ENCODE measurements at regions of chr6 and their contacts with region 1.

Region 1: GRCh38 chr6:41545703-41546474 is at the start of gene FOXP4:
- DNase-seq: peak; percentile 90
- H3K4me3 Mint-ChIP-seq: peak within 1 kb of the TSS; percentile 94
- H3K27ac Mint-ChIP-seq: peak within 1 kb of the TSS; percentile 85
- H3K4me1 Mint-ChIP-seq: peaks cover 28% of the 10 kb centered on the region
- H3K27me3 Mint-ChIP-seq: peaks cover 2% of the 10 kb centered on the region
- total RNA-seq, gene FOXP4: 19.5 to 21.6 TPM

Region 2: DNA sequence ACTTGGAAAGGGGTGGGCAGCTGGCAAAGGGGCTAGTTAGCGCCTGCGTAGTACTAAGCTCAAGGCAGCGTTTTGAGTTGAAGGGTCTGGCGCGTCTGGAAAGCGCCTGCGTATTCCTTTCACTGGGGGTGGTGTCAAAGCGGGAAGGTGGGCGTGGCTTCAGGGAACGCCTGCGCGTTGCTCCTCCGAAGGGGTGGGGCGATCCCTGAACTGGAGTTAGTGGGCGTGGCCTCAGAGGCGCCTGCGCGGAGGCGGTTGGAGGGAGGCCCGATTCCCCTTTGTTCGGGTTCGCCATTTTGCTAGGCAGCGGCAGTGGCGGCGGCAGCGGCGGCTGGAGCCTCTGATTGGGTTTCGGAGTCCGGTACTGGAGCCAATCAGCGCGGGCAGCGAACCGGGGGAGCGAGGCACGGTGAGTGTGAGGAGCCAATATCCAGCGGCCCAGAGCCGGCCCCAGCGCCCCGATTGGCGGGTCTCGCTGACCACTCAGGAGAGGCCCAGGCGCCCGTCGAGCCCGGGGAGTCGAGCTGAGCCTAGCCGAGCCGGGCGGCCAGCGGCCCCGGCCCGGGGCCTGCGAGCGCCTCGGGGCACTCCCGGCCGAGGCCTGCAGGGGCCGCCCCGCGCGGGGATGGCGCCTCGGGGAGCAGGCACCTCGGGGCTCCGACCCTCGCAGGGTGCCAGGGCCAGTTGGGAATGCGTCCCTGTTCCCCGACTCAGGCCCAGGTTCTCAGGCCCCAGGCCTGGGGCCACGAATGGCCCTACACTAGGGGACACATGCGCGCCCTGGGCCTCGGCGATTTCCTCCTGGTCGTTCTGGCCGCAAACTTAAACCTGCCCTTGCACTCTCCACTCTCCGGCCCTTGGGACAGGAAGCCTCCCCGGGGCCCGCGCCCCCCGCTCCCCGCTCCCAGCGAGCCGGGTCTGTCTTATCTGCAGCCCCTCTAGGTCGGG is 472.9 kb before region 1 on chr6 and contains the start of gene NFYA:
- CTCF ChIA-PET with region 1: no interaction called
- POLR2A ChIA-PET with region 1: no interaction called
- intact Hi-C with region 1: loop called (anchors 5 kb)
- DNase-seq: peak; percentile 100
- H3K4me3 Mint-ChIP-seq: peak within 1 kb of the TSS; percentile 93
- H3K27ac Mint-ChIP-seq: peak within 1 kb of the TSS; percentile 98
- H3K4me1 Mint-ChIP-seq: peaks cover 52% of the 10 kb centered on the region
- H3K27me3 Mint-ChIP-seq: no peaks in the 10 kb centered on the region
- total RNA-seq, gene NFYA: 30.2 to 30.4 TPM

Region 3: GRCh38 chr6:41392246-41392645 is 153.6 kb before region 1 on chr6:
- CTCF ChIA-PET with region 1: no interaction called
- POLR2A ChIA-PET with region 1: no interaction called
- intact Hi-C with region 1: no loop called
- DNase-seq: no peak
- H3K4me3 Mint-ChIP-seq: no peak overlapping the region
- H3K27ac Mint-ChIP-seq: no peak overlapping the region
- H3K4me1 Mint-ChIP-seq: no peaks in the 10 kb centered on the region
- H3K27me3 Mint-ChIP-seq: peaks cover 15% of the 10 kb centered on the region

Region 4: GRCh38 chr6:41531591-41532582 is 14.0 kb before region 1 on chr6:
- CTCF ChIA-PET with region 1: interaction called, 9 read pairs
- POLR2A ChIA-PET with region 1: interaction called, 16 read pairs
- intact Hi-C with region 1: loop called (anchors 1 kb)
- DNase-seq: peak; percentile 88
- H3K4me3 Mint-ChIP-seq: peak overlapping the region; percentile 74
- H3K27ac Mint-ChIP-seq: peak overlapping the region; percentile 99
- H3K4me1 Mint-ChIP-seq: peaks cover 30% of the 10 kb centered on the region
- H3K27me3 Mint-ChIP-seq: no peaks in the 10 kb centered on the region

Region 5: DNA sequence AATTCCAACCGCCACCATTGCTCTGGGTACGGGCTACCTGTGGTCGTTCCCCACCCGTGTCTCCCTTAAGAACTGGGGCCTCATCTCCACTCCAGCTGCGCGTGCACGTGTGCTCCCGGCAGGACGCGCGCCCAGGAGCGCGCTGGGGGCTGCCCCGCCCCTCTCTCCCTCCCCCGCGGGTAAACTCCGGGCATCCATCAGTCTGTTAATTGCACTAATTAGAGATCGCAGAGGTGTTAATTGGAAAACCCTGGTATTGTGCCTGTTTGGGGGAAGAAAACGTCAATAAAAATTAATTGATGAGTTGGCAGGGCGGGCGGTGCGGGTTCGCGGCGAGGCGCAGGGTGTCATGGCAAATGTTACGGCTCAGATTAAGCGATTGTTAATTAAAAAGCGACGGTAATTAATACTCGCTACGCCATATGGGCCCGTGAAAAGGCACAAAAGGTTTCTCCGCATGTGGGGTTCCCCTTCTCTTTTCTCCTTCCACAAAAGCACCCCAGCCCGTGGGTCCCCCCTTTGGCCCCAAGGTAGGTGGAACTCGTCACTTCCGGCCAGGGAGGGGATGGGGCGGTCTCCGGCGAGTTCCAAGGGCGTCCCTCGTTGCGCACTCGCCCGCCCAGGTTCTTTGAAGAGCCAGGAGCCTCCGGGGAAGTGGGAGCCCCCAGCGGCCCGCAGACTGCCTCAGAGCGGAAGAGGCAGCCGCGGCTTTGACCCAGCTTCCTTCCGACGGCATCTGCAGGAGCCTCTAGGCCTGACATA is 14.7 kb after region 1 on chr6:
- CTCF ChIA-PET with region 1: no interaction called
- POLR2A ChIA-PET with region 1: interaction called, 3 read pairs
- intact Hi-C with region 1: loop called (anchors 1 kb)
- DNase-seq: peak; percentile 92
- H3K4me3 Mint-ChIP-seq: peak overlapping the region; percentile 81
- H3K27ac Mint-ChIP-seq: peak overlapping the region; percentile 79
- H3K4me1 Mint-ChIP-seq: peaks cover 26% of the 10 kb centered on the region
- H3K27me3 Mint-ChIP-seq: no peaks in the 10 kb centered on the region

Region 6: GRCh38 chr6:41571021-41571780 is 25.3 kb after region 1 on chr6:
- CTCF ChIA-PET with region 1: no interaction called
- POLR2A ChIA-PET with region 1: no interaction called
- intact Hi-C with region 1: no loop called
- DNase-seq: peak; percentile 47
- H3K4me3 Mint-ChIP-seq: no peak overlapping the region
- H3K27ac Mint-ChIP-seq: peak overlapping the region; percentile 1
- H3K4me1 Mint-ChIP-seq: peaks cover 14% of the 10 kb centered on the region
- H3K27me3 Mint-ChIP-seq: no peaks in the 10 kb centered on the region

Region 7: GRCh38 chr6:41591859-41592502 is 46.1 kb after region 1 on chr6:
- CTCF ChIA-PET with region 1: interaction called, 3 read pairs
- POLR2A ChIA-PET with region 1: no interaction called
- intact Hi-C with region 1: loop called (anchors 5 kb)
- DNase-seq: peak; percentile 86
- H3K4me3 Mint-ChIP-seq: no peak overlapping the region
- H3K27ac Mint-ChIP-seq: no peak overlapping the region
- H3K4me1 Mint-ChIP-seq: no peaks in the 10 kb centered on the region
- H3K27me3 Mint-ChIP-seq: no peaks in the 10 kb centered on the region